Activated CD8-positive, alpha-beta memory T cell treated with anti-CD3 and anti-CD28 coated beads, Interleukin-2, amount 10 ng/mL, durations not matched to agents 7 days and 5 days (primary cell): ENCODE measurements at regions of chr17 and their contacts with region 1.

Region 1: DNA sequence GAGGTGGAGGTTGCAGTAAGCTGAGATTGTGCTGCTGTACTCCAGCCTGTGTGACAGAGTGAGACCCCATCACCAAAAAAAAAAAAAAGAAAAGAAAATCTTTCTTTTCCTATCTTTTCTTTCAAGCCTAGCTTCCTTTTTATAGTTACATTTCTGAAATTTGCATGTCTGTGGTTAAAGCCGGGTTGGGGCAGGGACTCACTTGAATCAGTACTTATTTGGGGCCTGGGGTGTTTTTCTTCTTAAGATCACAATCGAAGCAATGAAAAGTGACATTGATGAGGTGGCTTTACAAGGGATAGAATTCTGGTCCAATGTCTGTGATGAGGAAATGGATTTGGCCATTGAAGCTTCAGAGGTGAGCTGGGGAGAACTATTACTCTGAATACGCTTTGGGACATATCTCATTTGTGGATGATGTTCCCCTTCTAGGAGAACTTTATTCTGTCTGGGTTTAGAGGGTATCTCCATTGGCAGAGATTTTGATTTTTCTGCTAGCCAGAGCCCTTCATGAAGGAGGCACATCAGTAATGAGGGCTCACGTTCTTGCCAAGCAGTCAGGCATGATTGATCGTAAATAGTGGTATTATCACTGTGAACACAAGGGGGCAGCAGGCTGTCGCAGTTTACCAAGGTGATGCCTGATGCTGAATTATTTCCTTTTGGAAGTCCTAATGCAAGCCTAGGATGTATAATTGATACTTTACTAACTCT is 14.3 kb downstream of the KPNB1 start:
- DNase-seq: peak; percentile 76
- ATAC-seq: peak; percentile 61
- H3K4me3 Mint-ChIP-seq: no peak overlapping the region
- H3K27ac Mint-ChIP-seq: peak overlapping the region; percentile 72
- H3K4me1 Mint-ChIP-seq: peaks cover 51% of the 10 kb centered on the region
- H3K27me3 Mint-ChIP-seq: no peaks in the 10 kb centered on the region

Region 2: DNA sequence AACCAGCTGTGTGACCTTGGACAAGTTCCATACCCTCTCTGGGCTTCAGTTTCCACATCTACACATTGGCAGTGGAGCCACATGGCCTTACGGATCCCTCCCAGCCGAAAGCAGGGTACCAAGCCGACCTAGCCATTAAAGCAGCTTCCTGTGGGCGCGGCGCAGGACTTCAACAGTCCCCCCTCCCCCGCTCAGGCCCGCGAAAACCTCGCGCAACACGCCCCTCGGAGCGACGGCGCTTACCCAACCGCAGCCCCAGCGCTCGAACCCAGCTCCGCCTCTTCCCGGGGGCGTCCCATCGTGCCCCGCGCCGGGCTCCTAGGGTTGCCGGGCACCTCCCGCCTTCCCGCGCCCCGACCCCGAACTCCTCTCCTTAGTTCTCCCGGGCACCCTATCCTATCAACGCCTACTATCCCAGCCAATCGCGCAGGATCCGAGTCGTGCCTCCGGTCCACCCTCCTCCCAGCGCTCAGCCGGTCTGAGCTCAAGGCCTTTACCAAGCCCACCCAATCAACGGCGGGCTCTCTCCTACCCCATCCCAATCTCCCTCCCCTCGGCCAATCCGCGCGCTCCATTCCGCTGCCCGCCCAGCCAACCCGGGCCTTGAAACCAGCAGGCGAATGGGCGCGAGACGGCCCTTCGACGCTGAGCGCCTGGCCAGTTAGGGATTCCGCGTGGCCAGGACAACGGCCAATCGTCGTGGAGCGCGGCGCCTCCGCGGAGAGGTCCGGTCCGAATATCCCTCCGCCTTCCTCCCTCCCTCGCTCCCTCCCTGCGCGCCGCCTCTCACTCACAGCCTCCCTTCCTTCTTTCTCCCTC is 14.7 kb before region 1 on chr17 and contains the start of gene KPNB1:
- CTCF ChIA-PET with region 1: interaction called, 75 read pairs
- DNase-seq: peak; percentile 100
- ATAC-seq: peak; percentile 87
- H3K4me3 Mint-ChIP-seq: peak within 1 kb of the TSS; percentile 99
- H3K27ac Mint-ChIP-seq: peak within 1 kb of the TSS; percentile 100
- H3K4me1 Mint-ChIP-seq: peaks cover 38% of the 10 kb centered on the region
- H3K27me3 Mint-ChIP-seq: no peaks in the 10 kb centered on the region
- total RNA-seq, gene KPNB1: 413 to 525 TPM

Region 3: DNA sequence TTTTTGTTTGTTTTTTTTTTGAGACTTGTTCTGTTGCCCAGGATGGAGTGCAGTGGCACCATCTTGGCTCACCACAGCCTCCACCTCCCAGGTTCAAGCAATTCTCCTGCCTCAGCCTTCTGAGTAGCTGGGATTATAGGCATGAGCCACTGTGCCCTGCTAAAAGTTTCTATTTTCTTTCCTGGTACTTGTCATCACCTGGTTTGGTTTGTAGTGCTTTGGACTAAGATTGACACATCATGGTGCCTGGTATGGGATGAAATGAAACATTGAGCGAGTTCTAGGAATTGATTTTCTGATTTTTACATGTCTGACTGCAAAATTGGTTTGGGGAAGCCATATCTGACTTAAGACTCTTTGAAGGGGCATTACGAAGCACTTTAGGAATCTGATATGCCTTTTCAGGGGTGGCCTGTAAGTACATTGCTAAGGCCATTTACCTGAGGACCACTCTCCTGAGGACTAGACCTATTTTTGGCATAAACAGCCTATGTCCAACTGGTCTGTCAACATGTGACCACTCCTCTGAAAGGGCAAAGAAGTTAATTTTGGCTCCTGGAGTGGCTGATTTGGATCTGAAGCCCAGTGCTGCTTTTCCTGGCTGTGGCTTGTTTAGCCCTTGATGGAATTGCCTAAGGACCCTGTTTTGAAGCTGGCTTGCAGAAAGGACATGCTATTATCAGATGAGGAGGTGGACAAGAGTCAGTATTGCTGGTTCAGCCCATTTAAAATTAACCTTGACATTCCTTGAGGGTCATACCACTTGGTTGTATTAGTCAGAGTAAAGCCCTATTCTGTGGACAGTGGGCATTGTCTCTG is 11.5 kb after region 1 on chr17:
- CTCF ChIA-PET with region 1: interaction called, 58 read pairs
- DNase-seq: no peak
- ATAC-seq: no peak
- H3K4me3 Mint-ChIP-seq: no peak overlapping the region
- H3K27ac Mint-ChIP-seq: no peak overlapping the region
- H3K4me1 Mint-ChIP-seq: peaks cover 36% of the 10 kb centered on the region
- H3K27me3 Mint-ChIP-seq: no peaks in the 10 kb centered on the region

Region 4: DNA sequence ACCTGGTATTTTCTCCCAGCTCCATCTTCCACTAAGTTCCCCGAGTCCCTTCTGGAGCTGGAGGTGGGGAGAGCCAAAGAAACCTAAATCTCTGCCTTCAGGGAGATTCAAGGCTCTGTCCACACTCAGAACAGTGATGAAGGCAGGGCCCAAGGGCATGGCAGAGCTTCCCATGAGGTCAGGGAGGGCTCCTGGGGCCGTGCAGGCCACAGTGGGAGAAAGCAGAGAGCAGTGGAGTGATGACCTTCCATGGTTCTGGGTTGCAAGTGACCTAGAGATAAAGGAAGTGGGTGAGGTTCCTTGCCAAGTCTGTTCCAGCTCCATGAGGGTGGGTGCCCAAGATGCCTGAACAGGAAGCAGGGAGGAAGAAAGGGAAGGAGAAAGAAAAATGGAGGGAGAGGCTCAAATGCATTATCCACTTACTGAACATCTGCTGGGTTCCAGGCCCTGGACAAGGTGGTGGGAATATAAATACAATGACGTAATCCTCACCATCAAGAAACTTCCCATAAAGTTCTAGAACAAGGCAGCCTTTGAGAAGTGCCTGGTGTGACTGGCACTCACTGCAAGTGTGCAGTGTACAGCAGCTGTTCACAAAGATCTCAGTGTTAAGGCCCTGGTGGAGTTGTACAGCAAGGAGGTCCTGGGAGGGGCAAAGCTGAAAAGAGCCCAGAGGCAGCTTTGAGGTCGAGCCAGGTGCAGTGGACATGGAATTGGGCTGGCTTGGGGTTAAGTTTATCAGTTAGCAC is 43.2 kb after region 1 on chr17:
- CTCF ChIA-PET with region 1: no interaction called
- DNase-seq: no peak
- ATAC-seq: no peak
- H3K4me3 Mint-ChIP-seq: no peak overlapping the region
- H3K27ac Mint-ChIP-seq: peak overlapping the region; percentile 92
- H3K4me1 Mint-ChIP-seq: peaks cover 57% of the 10 kb centered on the region
- H3K27me3 Mint-ChIP-seq: no peaks in the 10 kb centered on the region

Region 5: DNA sequence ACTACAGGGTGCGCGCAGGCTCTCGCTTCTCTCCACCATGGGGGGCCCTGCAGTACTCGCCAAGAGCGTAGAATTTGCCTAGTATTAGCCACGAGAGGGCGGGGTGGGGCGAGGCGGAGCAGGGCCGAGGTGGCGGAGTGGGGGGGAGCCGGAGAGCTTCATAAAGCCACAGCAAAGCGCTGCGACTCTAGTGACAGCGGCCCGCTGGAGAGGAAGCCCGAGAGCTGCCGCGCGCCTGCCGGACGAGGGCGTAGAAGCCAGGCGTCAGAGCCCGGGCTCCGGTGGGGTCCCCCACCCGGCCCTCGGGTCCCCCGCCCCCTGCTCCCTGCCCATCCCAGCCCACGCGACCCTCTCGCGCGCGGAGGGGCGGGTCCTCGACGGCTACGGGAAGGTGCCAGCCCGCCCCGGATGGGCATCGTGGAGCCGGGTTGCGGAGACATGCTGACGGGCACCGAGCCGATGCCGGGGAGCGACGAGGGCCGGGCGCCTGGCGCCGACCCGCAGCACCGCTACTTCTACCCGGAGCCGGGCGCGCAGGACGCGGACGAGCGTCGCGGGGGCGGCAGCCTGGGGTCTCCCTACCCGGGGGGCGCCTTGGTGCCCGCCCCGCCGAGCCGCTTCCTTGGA is 69.1 kb after region 1 on chr17 and contains the start of gene TBX21:
- CTCF ChIA-PET with region 1: interaction called, 10 read pairs
- DNase-seq: peak; percentile 97
- ATAC-seq: peak; percentile 82
- H3K4me3 Mint-ChIP-seq: peak within 1 kb of the TSS; percentile 93
- H3K27ac Mint-ChIP-seq: peak within 1 kb of the TSS; percentile 99
- H3K4me1 Mint-ChIP-seq: peaks cover 67% of the 10 kb centered on the region
- H3K27me3 Mint-ChIP-seq: no peaks in the 10 kb centered on the region
- total RNA-seq, gene TBX21: 59.0 to 68.4 TPM

Region 6: DNA sequence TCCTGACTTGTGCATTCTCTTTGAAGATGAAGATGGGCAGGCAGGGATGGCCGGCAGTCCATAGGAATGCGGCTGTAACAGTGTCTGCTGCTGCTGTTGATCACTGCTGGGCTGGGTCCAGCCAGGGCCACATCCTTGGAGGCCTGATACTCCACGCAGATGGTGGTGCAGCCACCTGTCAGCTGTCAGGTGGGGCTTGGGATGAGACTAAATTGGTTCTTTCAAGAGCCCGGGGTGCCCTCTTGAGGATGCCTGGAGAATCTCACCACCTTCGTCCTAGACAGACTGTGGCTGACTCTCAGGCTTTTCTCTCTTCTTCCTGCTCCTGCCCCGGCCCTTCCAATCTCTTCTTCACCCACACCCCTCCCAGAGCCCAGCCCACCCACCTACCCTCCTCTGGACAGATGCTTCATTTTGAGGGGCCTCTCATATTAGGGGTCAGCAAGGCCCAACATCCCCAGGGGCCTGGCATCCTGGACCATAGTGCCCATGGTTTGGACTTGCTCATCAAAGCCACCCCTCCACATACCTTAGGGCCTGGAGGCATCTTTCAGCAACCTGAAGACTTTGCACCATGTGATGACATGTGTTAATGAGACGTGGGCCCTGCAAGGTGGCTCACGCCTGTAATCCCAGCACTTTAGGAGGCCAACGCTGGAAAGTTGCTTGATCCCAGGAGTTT is 138.4 kb after region 1 on chr17:
- CTCF ChIA-PET with region 1: interaction called, 21 read pairs
- DNase-seq: peak; percentile 72
- ATAC-seq: peak; percentile 92
- H3K4me3 Mint-ChIP-seq: no peak overlapping the region
- H3K27ac Mint-ChIP-seq: no peak overlapping the region
- H3K4me1 Mint-ChIP-seq: no peaks in the 10 kb centered on the region
- H3K27me3 Mint-ChIP-seq: peaks cover 6% of the 10 kb centered on the region